ENCODE measurements at regions of chr6 and their contacts with region 1.

Region 1: GRCh38 chr6:43951063-43951755 is 176.0 kb downstream of the MRPL14 start:
- DNase-seq: peak; percentile 79

Region 2: DNA sequence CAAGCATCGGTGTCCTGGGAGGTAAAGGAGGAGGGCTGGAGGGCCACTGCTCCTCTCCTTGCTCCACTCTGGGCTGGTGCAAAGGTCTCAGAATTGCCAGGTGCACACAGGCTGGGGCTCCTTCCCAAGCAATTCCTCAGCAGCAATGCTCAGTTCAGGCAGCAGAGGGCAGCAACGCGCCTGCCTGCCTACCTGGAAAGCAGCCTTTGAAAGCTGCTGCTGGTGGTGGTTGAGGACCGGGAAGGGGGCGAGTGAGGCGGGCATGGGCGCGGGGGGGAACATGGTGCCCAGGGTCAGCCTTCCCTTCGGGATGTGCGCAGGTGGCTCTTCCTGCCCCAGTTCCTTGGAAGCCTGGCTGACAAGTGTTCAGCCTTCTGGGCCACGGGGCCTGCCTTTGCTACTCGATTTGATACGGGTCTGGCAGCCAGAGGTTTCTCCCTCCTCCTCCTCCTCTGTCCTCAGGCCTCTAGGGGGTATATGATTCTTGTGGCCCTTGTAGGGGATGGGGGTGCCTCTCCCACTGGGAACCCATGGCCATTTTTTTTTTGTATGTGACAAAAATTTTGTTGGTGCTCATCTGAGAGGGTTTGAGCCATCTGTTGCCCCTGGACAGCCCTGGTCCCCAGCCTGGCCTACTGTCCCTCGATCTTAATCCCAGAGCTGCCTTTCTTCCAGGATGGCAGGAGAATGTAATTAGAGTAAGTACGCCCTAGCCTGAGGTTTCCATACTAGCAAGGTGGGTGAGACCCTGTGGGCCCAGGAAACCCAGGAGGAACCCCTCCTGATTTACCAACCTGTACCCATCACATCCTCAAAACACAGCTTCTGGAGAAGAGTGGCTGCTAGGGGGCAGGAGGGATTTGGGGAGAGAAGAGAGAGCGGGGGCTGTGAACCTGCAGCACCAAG is 283.7 kb before region 1 on chr6:
- intact Hi-C with region 1: loop called (anchors 10 kb)
- DNase-seq: peak; percentile 90

Region 3: DNA sequence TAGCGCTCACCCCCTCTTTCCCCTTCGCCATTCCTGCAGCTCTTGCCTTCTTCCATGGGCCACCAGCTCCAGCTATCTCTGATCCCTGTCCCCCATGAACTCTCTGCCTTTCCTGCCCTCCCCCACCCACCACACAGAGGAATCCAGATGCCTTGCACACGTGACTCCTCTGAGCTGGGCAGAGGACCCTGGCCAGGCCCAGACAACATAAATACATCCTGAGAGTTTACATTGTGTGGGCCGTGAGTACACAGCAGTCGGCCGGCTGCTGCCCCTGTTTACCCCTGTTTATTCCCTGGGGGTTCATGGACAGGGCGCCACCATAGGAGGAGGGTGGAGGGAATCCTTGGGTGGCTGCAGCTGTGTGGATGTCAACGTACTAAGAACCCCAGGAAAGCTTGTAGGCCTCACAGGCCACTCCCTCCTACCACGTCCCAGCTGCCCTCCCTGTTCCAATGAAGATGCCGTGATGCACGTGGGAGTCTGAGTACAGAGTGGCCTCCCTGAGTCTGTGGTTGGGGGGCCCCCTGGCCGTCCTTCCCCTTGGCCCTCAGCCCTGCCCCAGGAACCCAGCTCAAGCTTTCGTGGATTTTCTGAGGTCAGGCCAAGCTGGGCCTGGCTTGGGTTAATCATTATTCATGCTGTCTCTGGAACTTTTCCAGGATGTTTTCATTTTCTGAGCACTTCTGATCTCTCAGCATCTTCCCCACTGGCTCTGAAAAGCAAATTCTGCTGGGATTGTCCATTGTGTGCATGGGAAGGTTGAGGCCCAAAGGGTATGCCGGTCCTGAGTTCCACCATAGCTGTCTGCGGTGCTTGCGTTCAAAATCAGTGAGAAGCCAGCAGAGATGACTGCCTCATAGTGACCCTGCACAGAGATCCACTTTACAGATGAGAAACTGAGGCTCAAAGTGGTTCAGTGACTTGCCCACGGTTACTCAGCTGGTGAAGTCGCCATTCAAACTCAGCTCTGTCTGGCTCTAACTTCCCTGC is 39.7 kb after region 1 on chr6:
- intact Hi-C with region 1: loop called (anchors 1 kb)
- DNase-seq: no peak

Region 4: DNA sequence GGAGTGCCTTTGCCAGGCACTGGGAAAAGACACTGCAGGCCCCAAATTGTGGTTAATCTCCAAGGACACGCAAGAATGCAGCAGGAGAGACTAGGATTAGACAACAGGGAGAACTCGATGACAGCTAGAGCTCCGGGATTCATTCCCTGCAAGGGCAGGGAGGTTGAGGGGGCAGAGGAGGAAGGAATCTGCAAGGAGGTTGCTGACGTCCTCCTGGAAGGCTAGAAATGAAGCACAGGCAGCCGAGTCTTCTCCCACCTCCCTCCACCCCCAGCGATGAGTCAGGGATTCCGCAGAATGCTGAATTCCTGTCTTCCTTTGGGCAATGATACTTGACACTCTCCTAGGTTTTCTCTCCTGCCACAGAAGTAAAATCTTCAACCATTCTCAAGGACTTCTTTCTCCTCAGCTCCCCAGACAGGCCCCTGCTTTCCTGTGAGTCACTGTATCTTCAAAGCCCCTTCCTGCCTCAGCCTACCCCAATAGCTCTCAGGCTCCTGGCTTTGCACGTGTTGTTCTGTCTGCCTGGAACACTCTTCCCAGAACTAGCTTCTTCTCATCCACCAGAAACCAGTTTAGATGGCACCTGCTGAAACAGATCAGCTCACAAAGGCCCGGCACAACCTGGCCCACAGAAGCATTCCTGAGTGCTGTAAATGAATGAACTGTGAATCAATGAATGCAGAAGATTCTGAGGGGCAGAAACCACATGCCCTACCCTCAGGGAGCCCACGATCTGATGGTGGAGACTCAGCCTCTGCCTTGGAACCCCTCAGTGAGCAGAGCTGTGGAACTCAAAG is 90.5 kb after region 1 on chr6:
- intact Hi-C with region 1: no loop called
- DNase-seq: peak; percentile 71

Region 5: GRCh38 chr6:44064089-44064947 is 113.1 kb after region 1 on chr6:
- intact Hi-C with region 1: loop called (anchors 5 kb)
- DNase-seq: peak; percentile 88

Region 6: GRCh38 chr6:44074439-44075136 is 123.4 kb after region 1 on chr6:
- intact Hi-C with region 1: loop called (anchors 2 kb)
- DNase-seq: no peak

Measured in cardiac septum (tissue), 1 donor.